Activated CD8-positive, alpha-beta T cell treated with anti-CD3 and anti-CD28 coated beads for 36 hours (primary cell): ENCODE measurements at regions of chr2 and their contacts with region 1.

Region 1: DNA sequence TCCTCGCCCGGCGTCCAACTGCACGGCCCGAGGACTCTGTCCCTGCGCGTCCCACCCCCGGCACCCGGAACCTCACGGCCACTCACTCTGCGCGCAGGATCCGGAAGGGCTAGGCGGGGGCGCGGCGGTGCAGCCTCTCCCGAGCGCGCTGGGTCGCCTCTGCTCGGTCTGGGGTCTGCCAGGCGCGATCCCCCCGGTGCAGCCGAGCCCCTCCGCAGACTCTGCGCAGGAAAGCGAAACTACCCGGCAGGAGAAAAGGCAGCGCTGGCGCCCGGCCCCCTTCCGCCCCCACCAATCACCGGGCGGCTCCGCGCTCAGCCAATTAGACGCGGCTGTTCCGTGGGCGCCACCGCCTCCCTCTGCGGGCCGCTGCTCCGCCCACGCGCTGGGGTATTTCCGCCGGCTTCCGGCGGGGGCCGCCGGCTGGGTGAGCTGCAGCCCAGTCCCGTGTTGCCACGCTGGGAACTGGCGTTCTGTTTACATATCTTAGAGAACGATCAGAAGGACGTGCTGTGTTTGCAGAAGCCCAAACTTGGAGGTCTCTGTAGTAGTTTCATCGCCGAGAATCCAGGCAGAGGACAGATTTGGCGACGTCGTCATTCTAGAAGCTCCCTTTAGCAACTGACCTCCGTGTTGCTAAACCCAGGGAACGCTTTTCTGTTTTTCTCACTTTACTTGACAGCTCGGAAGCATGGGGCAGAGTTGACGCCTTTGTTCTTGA is at the start of gene STAT1:
- DNase-seq: peak; percentile 95
- ATAC-seq: peak; percentile 84
- H3K4me3 Mint-ChIP-seq: no peak within 1 kb of the TSS
- H3K27ac Mint-ChIP-seq: no peak within 1 kb of the TSS
- H3K4me1 Mint-ChIP-seq: peaks cover 36% of the 10 kb centered on the region
- H3K27me3 Mint-ChIP-seq: no peaks in the 10 kb centered on the region
- CTCF ChIP-seq: no peak
- total RNA-seq, gene STAT1: 293 to 311 TPM

Region 2: GRCh38 chr2:190979906-190980629 is 34.0 kb before region 1 on chr2:
- CTCF ChIA-PET with region 1: interaction called, 3 read pairs
- POLR2A ChIA-PET with region 1: interaction called, 17 read pairs
- intact Hi-C with region 1: no loop called
- DNase-seq: no peak
- ATAC-seq: no peak
- H3K4me3 Mint-ChIP-seq: no peak overlapping the region
- H3K27ac Mint-ChIP-seq: peak overlapping the region; percentile 87
- H3K4me1 Mint-ChIP-seq: peaks cover 65% of the 10 kb centered on the region
- H3K27me3 Mint-ChIP-seq: no peaks in the 10 kb centered on the region
- CTCF ChIP-seq: no peak

Region 3: DNA sequence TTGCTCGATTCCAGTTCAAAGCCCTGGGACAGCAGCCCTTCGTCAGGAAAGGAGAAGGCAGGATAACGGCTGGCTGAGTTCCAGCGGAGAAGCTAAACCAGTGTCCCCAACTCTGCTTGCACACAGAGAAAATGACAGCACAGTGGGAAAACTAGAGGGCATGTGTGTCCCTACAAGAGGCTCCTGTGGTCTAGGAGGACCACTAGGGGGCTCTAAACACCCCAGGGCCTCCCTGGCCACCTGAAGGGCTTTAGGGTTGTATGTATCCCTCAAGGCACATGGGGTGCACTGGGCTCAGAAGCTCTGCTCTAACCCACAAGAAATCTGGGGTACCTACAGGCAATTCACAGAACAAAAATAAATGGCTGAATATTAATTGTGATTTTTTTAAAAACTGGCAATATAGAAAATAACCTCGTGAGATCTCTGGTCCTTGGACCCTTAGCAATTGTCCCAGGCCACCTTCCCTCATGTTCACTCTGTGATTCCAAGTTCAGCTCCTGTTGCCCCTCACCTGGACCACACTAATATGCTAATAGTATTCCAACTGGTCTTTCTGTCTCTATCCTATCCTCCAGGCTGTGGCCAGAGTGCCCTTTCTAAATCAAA is 17.6 kb before region 1 on chr2:
- CTCF ChIA-PET with region 1: interaction called, 4 read pairs
- POLR2A ChIA-PET with region 1: interaction called, 144 read pairs
- intact Hi-C with region 1: no loop called
- DNase-seq: peak; percentile 42
- ATAC-seq: peak; percentile 49
- H3K4me3 Mint-ChIP-seq: no peak overlapping the region
- H3K27ac Mint-ChIP-seq: peak overlapping the region; percentile 65
- H3K4me1 Mint-ChIP-seq: peaks cover 58% of the 10 kb centered on the region
- H3K27me3 Mint-ChIP-seq: no peaks in the 10 kb centered on the region
- CTCF ChIP-seq: peak; percentile 41

Region 4: DNA sequence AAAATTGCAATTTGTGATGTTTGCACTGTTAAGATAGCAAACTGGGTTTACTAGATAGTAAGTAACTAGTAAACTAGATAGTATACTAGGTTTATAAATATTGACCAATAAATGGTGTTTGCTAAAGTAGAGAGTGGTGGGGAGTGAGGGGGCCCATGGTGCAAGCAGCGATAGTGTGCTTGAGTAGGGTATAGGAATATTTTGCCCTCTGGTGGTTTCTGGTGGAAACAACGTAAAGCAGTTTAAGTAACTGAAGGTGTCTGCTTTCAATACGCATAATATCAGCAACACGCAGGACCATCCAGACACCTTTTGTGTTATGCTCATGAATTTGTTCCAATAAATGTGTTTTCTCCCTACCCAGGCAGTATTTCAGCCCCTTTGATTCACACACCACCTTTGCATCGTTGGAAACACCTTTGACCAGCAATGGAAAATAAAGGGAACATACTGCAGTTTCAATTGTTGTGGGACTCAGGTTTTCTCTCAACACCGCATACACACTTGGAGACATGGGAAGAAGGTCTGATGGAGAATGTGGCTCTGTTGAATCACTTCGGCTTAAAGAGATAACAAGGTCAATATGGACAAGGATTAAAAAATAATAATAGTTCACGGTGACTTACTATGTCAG is 16.5 kb after region 1 on chr2:
- CTCF ChIA-PET with region 1: interaction called, 12 read pairs
- POLR2A ChIA-PET with region 1: interaction called, 178 read pairs
- intact Hi-C with region 1: no loop called
- DNase-seq: peak; percentile 59
- ATAC-seq: peak; percentile 78
- H3K4me3 Mint-ChIP-seq: no peak overlapping the region
- H3K27ac Mint-ChIP-seq: peak overlapping the region; percentile 66
- H3K4me1 Mint-ChIP-seq: peaks cover 45% of the 10 kb centered on the region
- H3K27me3 Mint-ChIP-seq: no peaks in the 10 kb centered on the region
- CTCF ChIP-seq: peak; percentile 73

Region 5: DNA sequence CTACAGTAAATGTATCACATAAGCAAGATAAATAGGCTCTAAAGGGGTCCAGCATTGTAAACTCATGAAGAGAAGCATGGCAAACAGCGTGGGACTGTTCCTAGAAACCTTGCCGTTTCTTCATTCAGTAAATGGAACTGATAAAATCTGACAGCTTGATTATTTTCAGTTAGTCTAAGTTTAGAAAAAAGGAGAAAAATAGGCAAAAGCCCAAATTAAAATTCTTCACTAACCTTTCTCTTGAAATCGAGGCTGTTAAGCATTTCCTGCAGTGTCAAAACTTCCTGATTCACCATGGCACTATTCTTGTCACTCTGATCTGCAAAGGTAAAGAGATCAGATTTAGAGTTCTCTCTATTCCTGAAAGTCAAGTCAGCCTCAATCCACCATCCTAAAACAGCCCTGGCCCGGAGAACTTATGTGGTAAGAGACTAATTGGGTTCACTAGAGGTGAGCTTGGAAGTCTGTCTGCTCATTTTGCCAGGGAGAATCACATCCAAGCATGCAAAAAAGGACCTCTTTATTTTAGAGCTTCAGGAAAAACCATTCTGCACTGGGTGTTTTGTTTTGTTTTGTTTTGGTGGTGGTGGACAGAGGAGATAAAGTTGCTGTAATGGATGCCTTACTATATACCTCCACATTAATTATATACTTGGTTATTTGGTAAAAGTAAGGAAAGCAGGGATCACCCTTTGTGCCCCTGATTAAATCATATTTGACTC is 52.3 kb after region 1 on chr2:
- CTCF ChIA-PET with region 1: no interaction called
- POLR2A ChIA-PET with region 1: interaction called, 5 read pairs
- intact Hi-C with region 1: loop called (anchors 2 kb)
- DNase-seq: peak; percentile 24
- ATAC-seq: peak; percentile 40
- H3K4me3 Mint-ChIP-seq: peak overlapping the region; percentile 84
- H3K27ac Mint-ChIP-seq: peak overlapping the region; percentile 79
- H3K4me1 Mint-ChIP-seq: peaks cover 82% of the 10 kb centered on the region
- H3K27me3 Mint-ChIP-seq: no peaks in the 10 kb centered on the region
- CTCF ChIP-seq: no peak

Region 6: GRCh38 chr2:191180713-191181112 is 166.6 kb after region 1 on chr2:
- CTCF ChIA-PET with region 1: no interaction called
- POLR2A ChIA-PET with region 1: no interaction called
- intact Hi-C with region 1: no loop called
- DNase-seq: peak; percentile 35
- ATAC-seq: peak; percentile 70
- H3K4me3 Mint-ChIP-seq: no peak overlapping the region
- H3K27ac Mint-ChIP-seq: no peak overlapping the region
- H3K4me1 Mint-ChIP-seq: peaks cover 35% of the 10 kb centered on the region
- H3K27me3 Mint-ChIP-seq: no peaks in the 10 kb centered on the region
- CTCF ChIP-seq: no peak